ENCODE measurements at regions of chr21 and their contacts with region 1.

Region 1: DNA sequence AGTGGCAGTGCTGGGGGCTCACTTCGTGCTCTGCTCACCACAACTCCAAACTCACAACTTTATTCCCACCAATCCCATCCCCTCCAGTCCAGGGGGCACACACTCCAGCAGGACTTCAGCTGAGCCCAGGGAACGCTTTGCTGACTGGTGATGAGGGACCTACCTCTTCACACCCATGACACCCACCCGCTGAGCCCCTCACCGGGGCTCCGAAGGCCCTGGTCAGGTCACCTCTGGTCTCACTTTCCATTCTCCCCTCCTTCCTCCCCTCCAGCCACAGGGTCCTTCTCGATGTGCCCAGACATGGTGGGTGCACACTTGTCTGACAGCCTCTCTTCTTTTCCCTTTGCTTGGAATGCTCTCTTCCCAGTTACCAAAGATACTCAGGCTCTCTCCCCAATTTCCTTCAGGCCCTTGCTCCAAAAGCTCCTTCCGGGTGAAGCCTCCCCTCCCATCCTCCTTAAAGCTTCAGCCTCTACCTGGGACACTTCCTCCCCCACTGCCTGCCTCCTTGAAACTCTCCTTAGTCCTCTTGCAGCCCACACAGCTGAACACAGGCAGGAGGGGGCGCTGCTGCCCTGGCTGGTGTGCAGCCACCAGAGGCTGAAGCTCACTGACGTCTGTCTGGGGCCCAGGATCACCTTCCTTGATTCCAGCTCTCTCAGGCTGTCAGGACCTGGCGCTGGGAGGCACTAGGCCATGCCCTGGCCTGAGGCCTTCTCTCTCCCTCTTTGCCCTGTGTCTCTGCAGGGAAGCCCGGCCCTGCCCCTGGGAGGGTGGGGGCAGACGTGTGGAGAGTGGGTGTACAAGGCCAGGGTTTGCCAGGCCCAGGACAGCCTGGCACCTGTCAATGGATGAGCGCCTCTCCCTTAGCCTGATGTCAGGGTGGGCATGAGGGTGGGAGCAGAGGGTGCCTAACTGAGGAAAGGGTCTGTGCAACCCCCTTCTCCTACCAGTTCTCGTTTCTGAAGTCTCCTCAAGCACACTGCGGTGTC is 1.6 kb downstream of the KCNE1 start:
- DNase-seq: peak; percentile 13 to 69
- ATAC-seq: peak; percentile 59 to 95
- H3K4me3 ChIP-seq: no peak overlapping the region
- H3K27ac ChIP-seq: no peak overlapping the region
- H3K4me1 ChIP-seq: no peaks in the 10 kb centered on the region
- CTCF ChIP-seq: peak; percentile 32
- EP300 ChIP-seq: no peak
- POLR2A ChIP-seq: no peak
- RAD21 ChIP-seq: peak; percentile 50 to 72; a peak in 4 of 5 replicates

Region 2: GRCh38 chr21:34526618-34527290 is 16.3 kb after region 1 on chr21:
- CTCF ChIA-PET with region 1: interaction called, 10 read pairs
- POLR2A ChIA-PET with region 1: interaction called, 3 read pairs
- DNase-seq: peak; percentile 78 to 93
- ATAC-seq: peak; percentile 97
- H3K4me3 ChIP-seq: peak overlapping the region; percentile 49
- H3K27ac ChIP-seq: peak overlapping the region; percentile 85 to 89
- H3K4me1 ChIP-seq: peaks cover 42% of the 10 kb centered on the region
- CTCF ChIP-seq: no peak
- EP300 ChIP-seq: no peak; a peak in 1 of 5 replicates
- POLR2A ChIP-seq: no peak
- RAD21 ChIP-seq: no peak

Region 3: DNA sequence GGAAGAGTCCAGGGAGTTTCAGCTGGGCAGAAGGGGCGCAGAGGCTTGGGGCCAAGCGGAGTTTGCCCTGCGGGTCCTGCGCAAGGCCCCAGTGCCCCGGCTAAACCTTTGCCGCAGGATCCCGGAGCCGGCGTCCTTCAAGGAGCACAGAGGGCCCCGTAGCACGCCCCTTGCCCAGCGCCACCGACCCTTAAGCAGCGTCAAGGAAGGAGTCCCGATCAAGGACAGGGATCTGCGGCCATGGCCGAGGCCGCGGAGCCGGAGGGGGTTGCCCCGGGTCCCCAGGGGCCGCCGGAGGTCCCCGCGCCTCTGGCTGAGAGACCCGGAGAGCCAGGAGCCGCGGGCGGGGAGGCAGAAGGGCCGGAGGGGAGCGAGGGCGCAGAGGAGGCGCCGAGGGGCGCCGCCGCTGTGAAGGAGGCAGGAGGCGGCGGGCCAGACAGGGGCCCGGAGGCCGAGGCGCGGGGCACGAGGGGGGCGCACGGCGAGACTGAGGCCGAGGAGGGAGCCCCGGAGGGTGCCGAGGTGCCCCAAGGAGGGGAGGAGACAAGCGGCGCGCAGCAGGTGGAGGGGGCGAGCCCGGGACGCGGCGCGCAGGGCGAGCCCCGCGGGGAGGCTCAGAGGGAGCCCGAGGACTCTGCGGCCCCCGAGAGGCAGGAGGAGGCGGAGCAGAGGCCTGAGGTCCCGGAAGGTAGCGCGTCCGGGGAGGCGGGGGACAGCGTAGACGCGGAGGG is 158.9 kb after region 1 on chr21:
- CTCF ChIA-PET with region 1: no interaction called
- POLR2A ChIA-PET with region 1: no interaction called
- DNase-seq: no peak
- ATAC-seq: no peak; a peak in 2 of 6 replicates
- H3K4me3 ChIP-seq: peak overlapping the region; percentile 46; the same call in 1 of the 3 replicates
- H3K27ac ChIP-seq: no peak overlapping the region
- H3K4me1 ChIP-seq: no peaks in the 10 kb centered on the region
- CTCF ChIP-seq: no peak
- EP300 ChIP-seq: no peak
- POLR2A ChIP-seq: no peak
- RAD21 ChIP-seq: no peak

Region 4: DNA sequence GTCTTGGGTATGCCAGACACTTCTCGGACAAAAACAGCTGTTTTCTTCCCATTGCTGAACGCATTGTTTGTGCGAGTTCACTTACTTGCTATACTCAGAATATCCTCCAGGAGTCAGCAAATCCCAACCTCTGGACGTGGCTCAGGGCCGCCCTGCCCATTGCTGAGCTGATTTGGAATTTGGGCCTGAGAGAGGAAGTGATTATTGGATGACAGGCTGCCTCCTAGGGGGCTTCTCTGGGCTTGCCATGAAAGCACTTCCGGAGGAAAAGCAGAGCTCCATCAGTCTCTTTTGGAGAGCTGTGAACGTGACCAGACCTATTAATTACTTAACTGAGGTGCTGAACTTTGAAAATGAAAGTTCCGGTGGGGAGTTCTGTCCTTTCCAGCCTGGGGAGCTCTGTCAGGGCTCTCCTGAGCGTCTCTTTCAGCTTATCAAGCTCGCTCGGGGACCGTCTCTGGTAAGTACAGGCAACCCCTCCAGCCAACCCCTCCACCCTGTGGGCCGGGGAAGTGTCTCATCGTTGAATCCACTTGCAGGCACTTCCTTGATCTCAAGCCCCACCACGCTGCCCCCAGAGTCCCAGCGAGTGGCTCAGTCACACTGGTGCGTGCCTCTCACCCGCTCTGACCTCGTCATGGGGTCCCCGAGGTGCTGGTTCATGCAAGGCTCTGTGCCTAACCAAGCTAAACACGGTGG is 235.3 kb after region 1 on chr21:
- CTCF ChIA-PET with region 1: no interaction called
- POLR2A ChIA-PET with region 1: no interaction called
- DNase-seq: peak; percentile 41 to 76
- ATAC-seq: peak; percentile 97 to 98
- H3K4me3 ChIP-seq: no peak overlapping the region
- H3K27ac ChIP-seq: peak overlapping the region; percentile 72 to 85
- H3K4me1 ChIP-seq: peaks cover 4% of the 10 kb centered on the region; the same call in 2 of the 3 replicates
- CTCF ChIP-seq: peak; percentile 72
- EP300 ChIP-seq: no peak
- POLR2A ChIP-seq: no peak
- RAD21 ChIP-seq: peak; percentile 94

Measured in A549 (cell line).